ENCODE measurements at regions of chr5 and their contacts with region 1.

Region 1: DNA sequence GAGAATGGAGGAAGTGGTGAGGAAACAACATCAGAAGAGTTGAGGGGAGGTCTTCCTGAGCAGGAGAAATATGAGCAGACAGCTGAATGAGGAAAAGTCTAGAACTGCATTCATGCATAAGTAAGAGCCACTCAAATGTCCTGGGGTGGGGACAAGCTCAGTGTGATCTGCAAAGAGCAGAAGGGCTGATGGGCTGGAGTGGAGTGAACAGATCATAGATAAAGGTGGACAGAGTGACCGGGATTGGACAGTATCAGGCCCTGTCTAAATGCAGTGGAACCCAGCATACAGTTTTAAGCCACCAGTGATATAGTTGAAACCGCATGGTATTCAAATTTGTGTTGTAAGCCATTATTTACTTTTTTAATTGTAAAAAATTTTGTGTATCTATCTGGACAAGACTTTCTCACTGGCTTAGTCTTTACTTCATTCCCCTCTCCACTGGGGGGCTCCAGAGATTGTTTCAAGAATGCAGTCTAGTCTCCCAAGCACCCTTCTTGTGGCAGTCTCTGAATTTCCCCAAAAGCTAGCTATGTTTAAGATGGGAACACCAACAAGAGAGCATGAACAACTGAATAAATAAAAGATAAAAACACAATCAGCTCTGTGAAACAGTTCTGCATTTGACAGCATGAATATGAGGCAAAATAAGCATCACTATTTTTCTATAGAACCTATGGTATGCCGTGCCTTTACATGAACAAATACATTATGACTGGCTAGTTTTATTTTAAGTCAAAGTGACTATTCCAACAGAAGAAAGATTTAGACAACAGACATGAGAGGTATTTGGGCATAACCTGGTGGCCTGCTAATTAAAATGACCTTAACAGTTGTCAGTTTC is 10.7 kb upstream of the STK32A start:
- DNase-seq: peak; percentile 27 to 38
- ATAC-seq: peak; percentile 79 to 92; a peak in 5 of 6 replicates
- H3K4me3 ChIP-seq: no peak overlapping the region
- H3K27ac ChIP-seq: no peak overlapping the region
- H3K4me1 ChIP-seq: no peaks in the 10 kb centered on the region
- CTCF ChIP-seq: peak; percentile 63
- EP300 ChIP-seq: no peak
- POLR2A ChIP-seq: no peak
- RAD21 ChIP-seq: peak; percentile 78 to 79

Region 2: GRCh38 chr5:147375151-147375550 is 151.0 kb after region 1 on chr5:
- CTCF ChIA-PET with region 1: interaction called, 65 read pairs
- POLR2A ChIA-PET with region 1: interaction called, 4 read pairs
- DNase-seq: no peak
- ATAC-seq: no peak
- H3K4me3 ChIP-seq: no peak overlapping the region
- H3K27ac ChIP-seq: no peak overlapping the region
- H3K4me1 ChIP-seq: no peaks in the 10 kb centered on the region
- CTCF ChIP-seq: no peak
- EP300 ChIP-seq: no peak
- POLR2A ChIP-seq: no peak
- RAD21 ChIP-seq: no peak

Region 3: GRCh38 chr5:147391781-147392180 is 167.6 kb after region 1 on chr5:
- CTCF ChIA-PET with region 1: interaction called, 15 read pairs
- POLR2A ChIA-PET with region 1: no interaction called
- DNase-seq: peak; percentile 48 to 56
- ATAC-seq: peak; percentile 95 to 98
- H3K4me3 ChIP-seq: no peak overlapping the region
- H3K27ac ChIP-seq: no peak overlapping the region
- H3K4me1 ChIP-seq: no peaks in the 10 kb centered on the region
- CTCF ChIP-seq: peak; percentile 33; the same call in 2 of the 3 replicates
- EP300 ChIP-seq: no peak
- POLR2A ChIP-seq: no peak
- RAD21 ChIP-seq: peak; percentile 38 to 55; a peak in 4 of 5 replicates

Region 4: GRCh38 chr5:147613359-147613758 is 389.2 kb after region 1 on chr5:
- CTCF ChIA-PET with region 1: no interaction called
- POLR2A ChIA-PET with region 1: no interaction called
- DNase-seq: no peak
- ATAC-seq: no peak
- H3K4me3 ChIP-seq: no peak overlapping the region
- H3K27ac ChIP-seq: no peak overlapping the region
- H3K4me1 ChIP-seq: no peaks in the 10 kb centered on the region
- CTCF ChIP-seq: no peak
- EP300 ChIP-seq: no peak
- POLR2A ChIP-seq: no peak
- RAD21 ChIP-seq: no peak